ENCODE measurements at regions of chr11 and their contacts with region 1.

Region 1: GRCh38 chr11:12207384-12208150 is 97.2 kb downstream of the MICAL2 start:
- DNase-seq: peak in 1 of 9 donors; percentile 66
- ATAC-seq: peak; percentile 24
- H3K4me3 ChIP-seq: no peak overlapping the region
- H3K4me3 Mint-ChIP-seq: no peak overlapping the region
- H3K27ac ChIP-seq: no peak overlapping the region
- H3K27ac Mint-ChIP-seq: peak overlapping the region in 3 of 9 donors; percentile 28 to 76 (median 44)
- H3K4me1 ChIP-seq: no peaks in the 10 kb centered on the region
- H3K4me1 Mint-ChIP-seq: peaks cover 0 to 37% (median 0%) of the 10 kb centered on the region in 7 donors
- H3K27me3 ChIP-seq: no peaks in the 10 kb centered on the region
- H3K27me3 Mint-ChIP-seq: no peaks in the 10 kb centered on the region

Region 2: GRCh38 chr11:12159351-12160099 is 48.0 kb before region 1 on chr11:
- CTCF ChIA-PET with region 1: no interaction called
- POLR2A ChIA-PET with region 1: no interaction called
- intact Hi-C with region 1: no loop called
- DNase-seq: no peak
- ATAC-seq: peak; percentile 78
- H3K4me3 ChIP-seq: no peak overlapping the region
- H3K4me3 Mint-ChIP-seq: peak overlapping the region in 1 of 10 donors; percentile 21
- H3K27ac ChIP-seq: no peak overlapping the region
- H3K27ac Mint-ChIP-seq: peak overlapping the region in 2 of 9 donors; percentile 60 to 68
- H3K4me1 ChIP-seq: peaks cover 12 to 15% of the 10 kb centered on the region in 2 donors
- H3K4me1 Mint-ChIP-seq: peaks cover 11 to 89% (median 18%) of the 10 kb centered on the region in 7 donors
- H3K27me3 ChIP-seq: no peaks in the 10 kb centered on the region
- H3K27me3 Mint-ChIP-seq: no peaks in the 10 kb centered on the region

Region 3: DNA sequence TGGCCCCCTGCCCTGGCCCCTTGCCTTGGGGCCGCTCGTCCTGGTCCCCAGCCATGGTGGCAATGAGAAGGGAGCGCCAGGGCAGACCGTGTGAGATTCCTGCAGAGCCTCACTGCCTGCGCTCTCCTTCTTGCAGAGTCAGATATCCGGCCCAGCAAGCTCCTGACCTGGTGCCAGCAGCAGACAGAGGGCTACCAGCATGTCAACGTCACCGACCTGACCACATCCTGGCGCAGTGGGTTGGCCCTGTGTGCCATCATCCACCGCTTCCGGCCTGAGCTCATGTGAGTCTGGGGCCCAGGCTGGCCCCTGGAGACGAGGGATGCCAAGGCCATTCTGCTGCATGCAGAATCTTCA is 16.9 kb after region 1 on chr11:
- CTCF ChIA-PET with region 1: interaction called, 3 read pairs
- POLR2A ChIA-PET with region 1: no interaction called
- intact Hi-C with region 1: loop called in 1 of 2 experiments (anchors 2 kb)
- DNase-seq: peak; percentile 55 to 86 (median 81)
- ATAC-seq: peak; percentile 97
- H3K4me3 ChIP-seq: peak overlapping the region; percentile 52
- H3K4me3 Mint-ChIP-seq: peak overlapping the region; percentile 67 to 91 (median 75)
- H3K27ac ChIP-seq: peak overlapping the region; percentile 54
- H3K27ac Mint-ChIP-seq: peak overlapping the region; percentile 87 to 97 (median 91)
- H3K4me1 ChIP-seq: peaks cover 36 to 41% of the 10 kb centered on the region in 2 donors
- H3K4me1 Mint-ChIP-seq: peaks cover 33 to 51% (median 47%) of the 10 kb centered on the region in 7 donors
- H3K27me3 ChIP-seq: no peaks in the 10 kb centered on the region
- H3K27me3 Mint-ChIP-seq: no peaks in the 10 kb centered on the region